IMR-90 (cell line): ENCODE measurements at regions of chr14 and their contacts with region 1.

Region 1: DNA sequence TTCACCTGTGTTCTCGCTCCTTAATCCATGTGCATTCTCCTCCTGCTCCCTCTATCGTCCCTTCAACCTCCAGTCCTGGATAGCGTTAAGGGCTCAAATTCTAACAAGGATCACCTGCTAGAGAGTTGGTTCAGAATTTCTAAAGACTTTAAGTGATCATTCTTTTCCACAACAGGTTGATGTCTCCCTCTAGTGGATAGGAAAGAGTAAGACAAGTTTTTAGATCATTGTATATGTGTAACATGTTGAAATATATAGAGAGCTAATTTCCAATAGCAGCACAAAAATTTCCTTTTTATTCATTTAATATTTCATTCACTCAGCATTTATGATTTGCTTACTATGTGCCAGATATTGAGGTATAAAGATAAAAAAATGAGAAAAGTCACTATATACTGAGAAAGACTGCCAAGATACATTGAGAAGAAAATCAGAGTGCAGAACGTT is 9.3 kb upstream of the ESR2 start:
- DNase-seq: peak; percentile 68
- ATAC-seq: peak; percentile 77
- H3K4me3 ChIP-seq: no peak overlapping the region
- H3K27ac ChIP-seq: no peak overlapping the region
- H3K4me1 ChIP-seq: no peaks in the 10 kb centered on the region
- H3K27me3 ChIP-seq: peaks cover 8% of the 10 kb centered on the region
- CTCF ChIP-seq: peak; percentile 90
- POLR2A ChIP-seq: 0 out of 2 replicates have a peak, but pooled peaks have one; percentile 31
- RAD21 ChIP-seq: peak; percentile 85

Region 2: DNA sequence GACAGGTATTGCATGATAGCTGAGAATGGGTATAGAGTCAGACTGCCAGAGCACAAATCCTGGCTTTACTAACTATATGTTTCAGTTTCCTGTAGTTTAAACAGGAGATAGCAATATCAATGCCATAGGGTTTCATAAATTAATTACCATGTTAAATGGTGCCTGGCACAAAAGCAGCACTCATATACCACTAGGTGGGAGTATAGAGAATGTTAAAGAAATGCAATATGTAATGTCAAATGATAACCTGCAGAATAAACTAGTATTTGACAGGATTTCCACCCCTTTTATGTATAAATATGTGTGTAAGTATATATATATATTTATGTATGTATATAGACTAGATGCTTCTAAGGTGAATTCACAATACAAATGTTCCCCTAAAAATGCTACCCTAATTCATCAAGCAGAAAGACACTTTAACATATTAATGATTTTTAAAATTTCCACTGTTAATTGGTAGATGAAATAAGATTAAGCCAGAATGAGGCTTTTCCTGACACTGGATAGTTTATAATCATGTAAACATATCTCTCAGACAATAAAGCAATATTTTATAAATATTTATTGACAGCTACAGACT is 670.5 kb before region 1 on chr14:
- CTCF ChIA-PET with region 1: no interaction called
- POLR2A ChIA-PET with region 1: no interaction called
- dilution Hi-C with region 1: no loop called
- in situ Hi-C with region 1: no loop called
- intact Hi-C with region 1: loop called (anchors 5 kb)
- DNase-seq: peak; percentile 44
- ATAC-seq: peak; percentile 74
- H3K4me3 ChIP-seq: no peak overlapping the region
- H3K27ac ChIP-seq: no peak overlapping the region
- H3K4me1 ChIP-seq: no peaks in the 10 kb centered on the region
- H3K27me3 ChIP-seq: no peaks in the 10 kb centered on the region
- CTCF ChIP-seq: peak; percentile 70
- POLR2A ChIP-seq: no peak
- RAD21 ChIP-seq: peak; percentile 56

Region 3: DNA sequence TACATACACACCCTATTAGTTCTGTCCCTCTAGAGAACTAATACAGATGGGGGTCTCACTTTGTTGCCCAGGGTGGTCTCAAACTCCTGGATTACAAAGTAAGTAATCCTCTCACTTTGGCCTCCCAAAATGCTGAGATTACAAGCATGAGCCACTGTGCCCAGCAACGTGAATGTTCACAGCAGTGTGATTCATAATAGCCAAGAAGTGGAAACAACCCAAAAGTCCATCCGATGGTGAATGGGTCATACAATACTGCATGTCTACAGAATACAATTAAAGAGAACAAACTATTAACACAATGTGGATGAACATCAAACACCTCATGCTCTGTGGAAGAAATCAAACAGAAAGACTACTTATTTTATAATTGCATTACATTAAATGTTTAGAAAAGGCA is 508.0 kb before region 1 on chr14:
- CTCF ChIA-PET with region 1: interaction called, 5 read pairs
- POLR2A ChIA-PET with region 1: no interaction called
- dilution Hi-C with region 1: no loop called
- in situ Hi-C with region 1: loop called (anchors 5 kb)
- intact Hi-C with region 1: loop called (anchors 2 kb)
- DNase-seq: no peak
- ATAC-seq: no peak
- H3K4me3 ChIP-seq: no peak overlapping the region
- H3K27ac ChIP-seq: no peak overlapping the region
- H3K4me1 ChIP-seq: no peaks in the 10 kb centered on the region
- H3K27me3 ChIP-seq: peaks cover 5% of the 10 kb centered on the region; the same call in 1 of the 2 replicates
- CTCF ChIP-seq: no peak
- POLR2A ChIP-seq: no peak
- RAD21 ChIP-seq: no peak

Region 4: GRCh38 chr14:63800651-63801375 is 502.7 kb before region 1 on chr14:
- CTCF ChIA-PET with region 1: interaction called, 3 read pairs
- POLR2A ChIA-PET with region 1: interaction called, 9 read pairs
- dilution Hi-C with region 1: no loop called
- in situ Hi-C with region 1: loop called (anchors 5 kb)
- intact Hi-C with region 1: loop called (anchors 2 kb)
- DNase-seq: no peak
- ATAC-seq: no peak
- H3K4me3 ChIP-seq: no peak overlapping the region
- H3K27ac ChIP-seq: no peak overlapping the region
- H3K4me1 ChIP-seq: no peaks in the 10 kb centered on the region
- H3K27me3 ChIP-seq: peaks cover 2% of the 10 kb centered on the region
- CTCF ChIP-seq: no peak
- POLR2A ChIP-seq: no peak
- RAD21 ChIP-seq: no peak

Region 5: GRCh38 chr14:64026600-64026999 is 276.9 kb before region 1 on chr14:
- CTCF ChIA-PET with region 1: interaction called, 3 read pairs
- POLR2A ChIA-PET with region 1: no interaction called
- dilution Hi-C with region 1: loop called (anchors 25 kb)
- in situ Hi-C with region 1: loop called (anchors 10 kb)
- intact Hi-C with region 1: no loop called
- DNase-seq: no peak
- ATAC-seq: no peak
- H3K4me3 ChIP-seq: no peak overlapping the region
- H3K27ac ChIP-seq: no peak overlapping the region
- H3K4me1 ChIP-seq: peaks cover 1% of the 10 kb centered on the region; the same call in 1 of the 2 replicates
- H3K27me3 ChIP-seq: no peaks in the 10 kb centered on the region
- CTCF ChIP-seq: no peak
- POLR2A ChIP-seq: no peak
- RAD21 ChIP-seq: no peak

Region 6: GRCh38 chr14:64040044-64040443 is 263.4 kb before region 1 on chr14:
- CTCF ChIA-PET with region 1: interaction called, 5 read pairs
- POLR2A ChIA-PET with region 1: no interaction called
- dilution Hi-C with region 1: loop called (anchors 25 kb)
- in situ Hi-C with region 1: loop called (anchors 10 kb)
- intact Hi-C with region 1: loop called (anchors 1 kb)
- DNase-seq: peak; percentile 44
- ATAC-seq: no peak; the same call in 1 of the 2 replicates
- H3K4me3 ChIP-seq: no peak overlapping the region
- H3K27ac ChIP-seq: no peak overlapping the region
- H3K4me1 ChIP-seq: no peaks in the 10 kb centered on the region; the same call in none of the 2 replicates
- H3K27me3 ChIP-seq: no peaks in the 10 kb centered on the region
- CTCF ChIP-seq: peak; percentile 72
- POLR2A ChIP-seq: no peak
- RAD21 ChIP-seq: peak; percentile 80